B cell (primary cell): ENCODE measurements at regions of chr16 and their contacts with region 1.

Region 1: GRCh38 chr16:88785106-88785924 is at the start of gene PIEZO1:
- DNase-seq: peak; percentile 89
- ATAC-seq: peak; percentile 36
- H3K4me3 ChIP-seq: peak within 1 kb of the TSS in 4 of 5 experiments; percentile 48 to 71 (median 64)
- H3K4me3 Mint-ChIP-seq: peak within 1 kb of the TSS; percentile 73
- H3K27ac ChIP-seq: peak within 1 kb of the TSS; percentile 26 to 77
- H3K27ac Mint-ChIP-seq: peak within 1 kb of the TSS; percentile 77
- H3K4me1 ChIP-seq: peaks cover 52 to 55% of the 10 kb centered on the region in 2 donors
- H3K4me1 Mint-ChIP-seq: peaks cover 47% of the 10 kb centered on the region
- H3K27me3 ChIP-seq: no peaks in the 10 kb centered on the region
- H3K27me3 Mint-ChIP-seq: no peaks in the 10 kb centered on the region
- CTCF ChIP-seq: peak; percentile 87
- total RNA-seq, gene PIEZO1: 108 and 118 TPM in 2 replicates

Region 2: GRCh38 chr16:88452482-88453216 is 332.7 kb before region 1 on chr16:
- CTCF ChIA-PET with region 1: no interaction called
- POLR2A ChIA-PET with region 1: no interaction called
- intact Hi-C with region 1: loop called (anchors 10 kb)
- DNase-seq: peak; percentile 98
- ATAC-seq: peak; percentile 74
- H3K4me3 ChIP-seq: peak overlapping the region in 4 of 5 experiments; percentile 47 to 86 (median 60)
- H3K4me3 Mint-ChIP-seq: peak overlapping the region; percentile 84
- H3K27ac ChIP-seq: peak overlapping the region in 1 of 2 donors; percentile 67
- H3K27ac Mint-ChIP-seq: peak overlapping the region; percentile 88
- H3K4me1 ChIP-seq: peaks cover 51 to 61% of the 10 kb centered on the region in 2 donors
- H3K4me1 Mint-ChIP-seq: peaks cover 62% of the 10 kb centered on the region
- H3K27me3 ChIP-seq: peaks cover 0 to 11% (median 0%) of the 10 kb centered on the region in 4 experiments
- H3K27me3 Mint-ChIP-seq: no peaks in the 10 kb centered on the region
- CTCF ChIP-seq: no peak

Region 3: DNA sequence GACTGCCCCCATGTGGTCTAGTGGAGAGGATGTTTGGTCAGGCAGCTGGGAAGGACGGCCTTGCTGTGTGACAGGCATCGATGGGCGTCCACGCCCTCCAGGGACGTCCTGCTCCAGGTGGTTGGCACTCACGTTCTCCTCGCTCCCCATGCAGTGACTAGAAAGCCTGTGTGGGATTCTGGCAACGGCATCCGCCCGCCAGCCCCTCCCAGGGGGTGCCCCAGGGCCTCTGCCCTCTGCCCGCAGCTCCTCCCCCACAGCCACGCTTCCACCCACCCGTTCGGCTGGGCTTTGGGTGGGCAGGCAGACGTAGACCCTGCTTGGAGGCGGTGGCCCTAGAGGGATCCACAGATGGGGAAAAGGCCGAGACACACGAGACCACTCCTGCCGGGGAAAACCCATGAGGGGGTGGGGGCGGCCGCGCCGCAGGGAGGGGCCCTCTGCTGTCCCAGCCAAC is 151.6 kb before region 1 on chr16:
- CTCF ChIA-PET with region 1: no interaction called
- POLR2A ChIA-PET with region 1: no interaction called
- intact Hi-C with region 1: loop called (anchors 10 kb)
- DNase-seq: no peak
- ATAC-seq: no peak
- H3K4me3 ChIP-seq: peak overlapping the region in 4 of 5 experiments; percentile 62 to 78 (median 68)
- H3K4me3 Mint-ChIP-seq: peak overlapping the region; percentile 85
- H3K27ac ChIP-seq: peak overlapping the region; percentile 81 to 87
- H3K27ac Mint-ChIP-seq: peak overlapping the region; percentile 92
- H3K4me1 ChIP-seq: peaks cover 37 to 56% of the 10 kb centered on the region in 2 donors
- H3K4me1 Mint-ChIP-seq: peaks cover 45% of the 10 kb centered on the region
- H3K27me3 ChIP-seq: peaks cover 0 to 6% (median 0%) of the 10 kb centered on the region in 4 experiments
- H3K27me3 Mint-ChIP-seq: no peaks in the 10 kb centered on the region
- CTCF ChIP-seq: no peak

Region 4: GRCh38 chr16:88743693-88744576 is 41.4 kb before region 1 on chr16:
- CTCF ChIA-PET with region 1: interaction called, 138 read pairs
- POLR2A ChIA-PET with region 1: interaction called, 6 read pairs
- intact Hi-C with region 1: loop called (anchors 1 kb)
- DNase-seq: peak; percentile 75
- ATAC-seq: no peak
- H3K4me3 ChIP-seq: no peak overlapping the region
- H3K4me3 Mint-ChIP-seq: peak overlapping the region; percentile 34
- H3K27ac ChIP-seq: no peak overlapping the region
- H3K27ac Mint-ChIP-seq: peak overlapping the region; percentile 78
- H3K4me1 ChIP-seq: peaks cover 47 to 59% of the 10 kb centered on the region in 2 donors
- H3K4me1 Mint-ChIP-seq: peaks cover 50% of the 10 kb centered on the region
- H3K27me3 ChIP-seq: no peaks in the 10 kb centered on the region
- H3K27me3 Mint-ChIP-seq: no peaks in the 10 kb centered on the region
- CTCF ChIP-seq: peak; percentile 93

Region 5: DNA sequence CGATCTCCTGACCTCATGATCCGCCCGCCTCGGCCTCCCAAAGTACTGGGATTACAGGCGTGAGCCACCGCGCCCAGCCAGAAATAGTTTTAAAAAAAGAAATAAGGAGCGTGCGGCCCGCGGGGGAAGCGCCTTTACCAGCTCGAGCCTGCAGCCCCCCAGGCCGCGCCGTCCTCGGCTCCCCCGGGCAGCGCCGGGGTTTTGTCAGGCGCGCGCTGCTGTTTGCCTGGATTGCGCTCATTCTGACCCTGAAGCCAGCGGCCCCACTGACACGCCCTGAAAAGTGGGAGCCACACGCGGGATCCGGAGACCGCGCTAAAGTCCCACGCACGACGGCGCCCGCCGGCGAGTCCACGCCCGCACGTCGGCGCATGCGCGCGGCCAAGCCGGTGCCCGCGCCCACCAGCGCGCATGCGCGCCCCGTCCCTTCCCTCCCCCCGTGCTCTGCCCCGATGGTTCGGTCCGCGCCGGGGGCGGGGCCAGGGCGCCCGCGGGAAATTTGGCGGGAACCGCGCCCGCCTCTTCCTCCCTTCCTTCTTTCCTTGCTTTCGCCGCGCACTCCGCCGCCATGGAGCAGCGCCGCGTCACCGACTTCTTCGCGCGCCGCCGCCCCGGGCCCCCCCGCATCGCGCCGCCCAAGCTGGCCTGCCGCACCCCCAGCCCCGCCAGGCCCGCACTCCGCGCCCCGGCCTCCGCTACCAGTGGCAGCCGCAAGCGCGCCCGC is 18.1 kb after region 1 on chr16 and contains the start of gene CDT1:
- CTCF ChIA-PET with region 1: interaction called, 9 read pairs
- POLR2A ChIA-PET with region 1: interaction called, 7 read pairs
- intact Hi-C with region 1: loop called (anchors 2 kb)
- DNase-seq: peak; percentile 92
- ATAC-seq: peak; percentile 68
- H3K4me3 ChIP-seq: peak within 1 kb of the TSS; percentile 52 to 81 (median 77)
- H3K4me3 Mint-ChIP-seq: peak within 1 kb of the TSS; percentile 86
- H3K27ac ChIP-seq: peak within 1 kb of the TSS; percentile 54 to 67
- H3K27ac Mint-ChIP-seq: peak within 1 kb of the TSS; percentile 87
- H3K4me1 ChIP-seq: peaks cover 26 to 40% of the 10 kb centered on the region in 2 donors
- H3K4me1 Mint-ChIP-seq: peaks cover 21% of the 10 kb centered on the region
- H3K27me3 ChIP-seq: peaks cover 0 to 4% (median 0%) of the 10 kb centered on the region in 4 experiments
- H3K27me3 Mint-ChIP-seq: no peaks in the 10 kb centered on the region
- CTCF ChIP-seq: no peak
- total RNA-seq, gene CDT1: 0.27 and 1.3 TPM in 2 replicates

Region 6: GRCh38 chr16:88856828-88857733 is 71.8 kb after region 1 on chr16 and contains the starts of genes GALNS and TRAPPC2L:
- CTCF ChIA-PET with region 1: interaction called, 8 read pairs
- POLR2A ChIA-PET with region 1: interaction called, 3 read pairs
- intact Hi-C with region 1: loop called (anchors 1 kb)
- DNase-seq: peak; percentile 97
- ATAC-seq: peak; percentile 91
- H3K4me3 ChIP-seq: peak within 1 kb of the TSS; percentile 80 to 98 (median 93)
- H3K4me3 Mint-ChIP-seq: peak within 1 kb of the TSS; percentile 97
- H3K27ac ChIP-seq: peak within 1 kb of the TSS; percentile 63 to 84
- H3K27ac Mint-ChIP-seq: peak within 1 kb of the TSS; percentile 94
- H3K4me1 ChIP-seq: peaks cover 30 to 36% of the 10 kb centered on the region in 2 donors
- H3K4me1 Mint-ChIP-seq: peaks cover 38% of the 10 kb centered on the region
- H3K27me3 ChIP-seq: no peaks in the 10 kb centered on the region
- H3K27me3 Mint-ChIP-seq: no peaks in the 10 kb centered on the region
- CTCF ChIP-seq: no peak
- total RNA-seq, gene GALNS: 68.4 and 81.3 TPM in 2 replicates
- total RNA-seq, gene TRAPPC2L: 55.5 and 65.1 TPM in 2 replicates